Activated CD4-positive, alpha-beta memory T cell treated with anti-CD3 and anti-CD28 coated beads, Interleukin-2, amount 10 ng/mL, durations not matched to agents 7 days and 5 days (primary cell): ENCODE measurements at regions of chr11 and their contacts with region 1.

Region 1: DNA sequence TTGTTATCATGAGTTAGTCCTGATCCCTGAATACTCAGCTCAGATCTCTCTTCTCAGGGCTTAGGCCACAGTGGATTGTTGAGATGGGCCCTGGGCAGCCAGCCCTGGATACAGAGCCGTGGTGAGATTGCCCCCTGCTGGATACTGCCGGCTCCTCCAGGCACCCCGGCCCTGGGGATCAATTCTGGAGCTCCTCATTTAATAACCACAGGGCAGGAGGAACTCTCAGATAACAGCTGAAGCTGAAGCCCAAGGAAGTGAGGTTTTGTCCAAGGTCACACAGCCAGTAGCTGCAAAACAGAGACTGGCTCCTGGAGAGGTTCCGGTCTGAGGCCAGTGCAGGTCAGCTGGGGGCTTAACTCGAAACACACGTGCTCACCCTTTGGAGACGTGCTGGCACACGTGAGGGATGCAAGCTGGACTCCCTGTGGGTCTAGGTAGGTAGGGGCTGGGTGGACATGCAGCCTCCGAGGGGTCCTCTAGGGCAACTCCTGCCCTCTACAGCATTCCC is 16.0 kb downstream of the USH1C start:
- DNase-seq: peak; percentile 52
- H3K4me3 Mint-ChIP-seq: no peak overlapping the region
- H3K27ac Mint-ChIP-seq: no peak overlapping the region
- H3K4me1 Mint-ChIP-seq: no peaks in the 10 kb centered on the region
- H3K27me3 Mint-ChIP-seq: peaks cover 7% of the 10 kb centered on the region

Region 2: GRCh38 chr11:17389211-17389956 is 138.9 kb before region 1 on chr11:
- CTCF ChIA-PET with region 1: interaction called, 30 read pairs
- POLR2A ChIA-PET with region 1: no interaction called
- DNase-seq: peak; percentile 74
- H3K4me3 Mint-ChIP-seq: peak overlapping the region; percentile 63
- H3K27ac Mint-ChIP-seq: no peak overlapping the region
- H3K4me1 Mint-ChIP-seq: peaks cover 12% of the 10 kb centered on the region
- H3K27me3 Mint-ChIP-seq: peaks cover 25% of the 10 kb centered on the region